GM12878 (cell line): ENCODE measurements at regions of chr1 and their contacts with region 1.

Region 1: GRCh38 chr1:158087320-158087927 is 93.3 kb upstream of the CD1D start:
- DNase-seq: no peak
- ATAC-seq: peak; percentile 94
- H3K4me3 ChIP-seq: no peak overlapping the region
- H3K27ac ChIP-seq: no peak overlapping the region
- H3K4me1 ChIP-seq: no peaks in the 10 kb centered on the region
- H3K27me3 ChIP-seq: peaks cover 0 to 2% of the 10 kb centered on the region in 2 experiments; a peak in 2 of 4 replicates
- CTCF ChIP-seq: peak; percentile 64 to 93 (median 86)
- EP300 ChIP-seq: no peak
- POLR2A ChIP-seq: no peak
- RAD21 ChIP-seq: peak; percentile 56

Region 2: GRCh38 chr1:157963713-157964112 is 123.7 kb before region 1 on chr1:
- CTCF ChIA-PET with region 1: interaction called, 9 read pairs
- POLR2A ChIA-PET with region 1: no interaction called
- RAD21 ChIA-PET with region 1: no interaction called
- SMC1A ChIA-PET with region 1: no interaction called
- in situ Hi-C with region 1: no loop called
- intact Hi-C with region 1: loop called (anchors 1 kb)
- DNase-seq: no peak
- ATAC-seq: peak; percentile 87
- H3K4me3 ChIP-seq: no peak overlapping the region
- H3K27ac ChIP-seq: no peak overlapping the region
- H3K4me1 ChIP-seq: peaks cover 6% of the 10 kb centered on the region
- H3K27me3 ChIP-seq: peaks cover 3 to 14% of the 10 kb centered on the region in 2 experiments; a peak in 3 of 4 replicates
- CTCF ChIP-seq: peak; percentile 74 to 78 (median 77)
- EP300 ChIP-seq: no peak
- POLR2A ChIP-seq: no peak
- RAD21 ChIP-seq: peak; percentile 85

Region 3: GRCh38 chr1:158177700-158178450 is 90.5 kb after region 1 on chr1:
- CTCF ChIA-PET with region 1: no interaction called
- POLR2A ChIA-PET with region 1: no interaction called
- RAD21 ChIA-PET with region 1: no interaction called
- SMC1A ChIA-PET with region 1: no interaction called
- in situ Hi-C with region 1: no loop called
- intact Hi-C with region 1: no loop called
- DNase-seq: no peak
- ATAC-seq: no peak
- H3K4me3 ChIP-seq: no peak overlapping the region
- H3K27ac ChIP-seq: no peak overlapping the region
- H3K4me1 ChIP-seq: peaks cover 31% of the 10 kb centered on the region
- H3K27me3 ChIP-seq: peaks cover 10 to 22% of the 10 kb centered on the region in 2 experiments
- CTCF ChIP-seq: no peak
- EP300 ChIP-seq: no peak
- POLR2A ChIP-seq: no peak
- RAD21 ChIP-seq: no peak